Mammary epithelial cell (primary cell): ENCODE measurements at regions of chr13 and their contacts with region 1.

Region 1: DNA sequence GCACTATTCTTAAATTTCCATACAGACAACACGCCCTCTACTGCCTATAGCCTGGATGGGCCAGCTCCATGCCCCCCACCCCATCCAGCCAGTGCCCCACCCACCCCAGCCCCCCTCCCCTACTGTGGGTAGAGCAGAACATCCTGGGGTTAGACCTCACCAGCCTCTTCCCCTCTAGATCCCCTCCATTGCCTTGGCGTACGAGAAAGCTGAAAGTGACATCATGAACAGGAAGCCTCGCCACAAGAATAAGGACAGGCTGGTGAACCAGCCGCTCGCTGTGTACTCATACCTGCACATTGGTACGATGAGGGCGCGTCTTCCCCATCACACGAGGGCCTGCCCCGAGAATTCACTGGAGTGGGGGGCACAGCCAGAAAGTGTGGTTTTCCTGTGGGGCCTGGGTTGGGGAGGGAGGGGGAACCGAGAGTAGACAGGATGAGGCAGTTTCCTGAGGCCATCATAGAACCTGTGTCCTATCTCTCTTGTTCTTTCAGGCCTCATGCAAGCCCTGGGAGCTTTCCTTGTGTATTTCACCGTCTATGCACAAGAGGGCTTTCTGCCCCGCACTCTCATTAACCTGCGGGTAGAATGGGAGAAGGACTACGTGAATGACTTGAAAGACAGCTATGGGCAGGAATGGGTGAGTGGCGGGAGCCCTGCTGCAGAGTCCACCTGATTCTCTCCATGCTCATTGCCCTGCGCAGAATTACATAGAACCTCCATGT is 29.1 kb downstream of the ATP12A start:
- DNase-seq: no peak
- H3K4me3 ChIP-seq: no peak overlapping the region
- H3K27ac ChIP-seq: no peak overlapping the region
- H3K4me1 ChIP-seq: no peaks in the 10 kb centered on the region
- H3K27me3 ChIP-seq: no peaks in the 10 kb centered on the region
- CTCF ChIP-seq: no peak

Region 2: DNA sequence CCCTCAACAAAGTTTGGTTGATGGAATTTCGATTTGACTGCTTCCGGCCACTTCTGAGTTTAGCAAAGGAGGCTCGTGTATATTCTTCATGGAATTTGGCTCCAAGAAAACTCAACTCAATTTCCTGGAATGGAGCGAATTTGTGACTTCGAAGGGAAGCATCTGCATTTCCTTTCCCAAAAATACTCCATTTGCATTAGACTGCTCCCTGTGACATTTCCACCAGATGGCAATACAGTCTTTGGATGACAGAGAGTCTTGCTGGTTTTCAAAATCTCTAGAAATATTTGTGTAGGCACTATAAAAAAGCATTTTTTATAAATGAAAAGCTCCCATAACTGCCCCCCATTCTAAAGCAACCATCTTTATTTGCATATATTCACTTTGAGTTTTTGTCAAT is 395.9 kb before region 1 on chr13:
- CTCF ChIA-PET with region 1: no interaction called
- dilution Hi-C with region 1: no loop called
- in situ Hi-C with region 1: loop called in 1 of 2 experiments (anchors 25 kb)
- intact Hi-C with region 1: no loop called
- DNase-seq: no peak
- H3K4me3 ChIP-seq: no peak overlapping the region
- H3K27ac ChIP-seq: no peak overlapping the region
- H3K4me1 ChIP-seq: no peaks in the 10 kb centered on the region
- H3K27me3 ChIP-seq: no peaks in the 10 kb centered on the region
- CTCF ChIP-seq: peak in 1 of 2 donors; percentile 27

Region 3: DNA sequence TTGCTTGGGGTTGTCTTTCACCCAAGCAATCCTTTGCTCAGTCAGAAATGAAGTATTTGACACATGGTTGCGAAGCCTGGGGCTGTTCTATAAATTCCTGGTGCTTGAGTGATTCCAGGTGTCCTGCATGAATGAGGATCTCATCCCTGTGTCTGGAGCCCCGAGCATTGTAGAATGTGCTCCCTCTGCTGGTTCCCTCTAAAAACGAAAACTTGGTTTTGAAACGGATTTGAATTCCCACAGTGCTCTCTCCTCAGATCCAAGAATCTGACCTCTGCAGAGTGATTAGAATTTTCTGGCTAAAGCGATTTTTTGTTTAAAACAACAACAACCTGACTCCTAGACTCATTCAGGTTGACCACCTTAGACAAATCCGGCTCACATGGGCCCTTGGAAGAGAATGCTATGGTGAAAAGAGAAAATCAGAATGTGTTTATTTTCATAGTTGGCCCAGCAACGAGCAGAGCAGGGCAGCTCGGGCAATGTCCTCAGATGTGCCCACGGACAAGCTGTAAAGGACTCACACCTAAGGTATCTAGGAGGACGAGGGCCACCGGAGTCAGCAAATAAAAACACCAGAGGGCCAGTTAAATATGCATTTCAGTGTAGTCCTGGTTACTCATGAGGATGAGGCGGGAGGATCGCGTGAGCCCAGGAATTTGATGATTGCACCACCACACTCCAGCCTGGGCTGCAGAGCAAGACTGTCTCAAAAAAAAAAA is 37.8 kb before region 1 on chr13:
- CTCF ChIA-PET with region 1: no interaction called
- dilution Hi-C with region 1: no loop called
- in situ Hi-C with region 1: no loop called
- intact Hi-C with region 1: no loop called
- DNase-seq: peak; percentile 87
- H3K4me3 ChIP-seq: peak overlapping the region in 1 of 3 experiments; percentile 1
- H3K27ac ChIP-seq: peak overlapping the region; percentile 99
- H3K4me1 ChIP-seq: peaks cover 44% of the 10 kb centered on the region
- H3K27me3 ChIP-seq: no peaks in the 10 kb centered on the region
- CTCF ChIP-seq: peak; percentile 61 to 83